ENCODE measurements at regions of chr17 and their contacts with region 1.

Region 1: DNA sequence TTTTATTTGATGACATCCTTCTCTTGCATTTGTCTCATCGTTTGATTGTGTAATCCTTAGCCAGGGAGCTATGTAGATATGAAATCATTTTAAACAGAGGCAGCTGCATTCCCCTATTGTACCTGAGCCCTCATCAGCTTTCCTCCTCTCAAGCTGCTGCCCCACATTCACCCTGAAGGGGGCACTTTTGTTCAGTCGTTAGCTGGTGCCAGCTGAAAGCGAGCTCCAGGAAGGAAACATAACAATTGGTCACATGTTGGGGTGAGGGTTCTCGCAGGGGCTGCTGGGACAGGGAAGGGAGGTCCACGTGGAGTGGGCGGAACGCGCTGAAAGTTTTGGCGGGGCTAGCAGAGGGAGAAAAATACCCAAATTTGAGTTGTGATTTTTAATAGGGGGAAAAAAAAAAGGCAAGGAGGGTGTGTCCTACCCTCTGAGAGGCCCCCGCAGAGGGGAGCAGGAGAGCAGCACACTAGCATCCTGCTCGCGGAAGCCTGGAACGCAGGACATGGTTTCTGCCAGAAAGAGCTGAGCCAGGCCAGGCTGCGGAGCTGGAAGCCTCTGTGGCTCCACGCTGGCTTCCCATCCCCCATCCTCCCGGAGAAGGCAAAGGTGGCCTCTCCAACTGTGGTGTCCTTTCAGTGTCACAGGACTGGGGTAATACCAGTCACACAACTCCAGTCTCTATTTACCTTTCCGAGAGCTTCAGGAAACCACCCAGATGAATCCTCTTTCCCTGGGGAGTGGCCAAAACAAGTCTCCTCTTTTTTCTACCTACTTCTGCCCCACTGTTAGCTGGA is 8.5 kb upstream of the MSL1 start:
- DNase-seq: peak; percentile 96 to 97
- H3K4me3 ChIP-seq: peak overlapping the region; percentile 38 to 41
- H3K27ac ChIP-seq: peak overlapping the region; percentile 90 to 99
- H3K4me1 ChIP-seq: peaks cover 26 to 36% of the 10 kb centered on the region in 2 donors
- H3K27me3 ChIP-seq: no peaks in the 10 kb centered on the region
- CTCF ChIP-seq: peak; percentile 83 to 97 (median 95)
- POLR2A ChIP-seq: peak in 1 of 2 donors; percentile 51

Region 2: GRCh38 chr17:40062329-40063186 is 50.8 kb before region 1 on chr17 and contains the start of gene THRA:
- intact Hi-C with region 1: loop called (anchors 5 kb)
- DNase-seq: peak; percentile 71 to 77
- H3K4me3 ChIP-seq: peak within 1 kb of the TSS; percentile 99 to 100
- H3K27ac ChIP-seq: peak within 1 kb of the TSS; percentile 98
- H3K4me1 ChIP-seq: peaks cover under 1 to 5% of the 10 kb centered on the region in 2 donors
- H3K27me3 ChIP-seq: no peaks in the 10 kb centered on the region
- CTCF ChIP-seq: peak in 3 of 4 experiments; percentile 27 to 44 (median 39)
- POLR2A ChIP-seq: peak; percentile 44 to 51
- total RNA-seq, gene THRA: 19.7 to 124 (median 63.1) TPM

Measured in uterus (tissue), 4 donors.